ENCODE measurements at regions of chr1 and their contacts with region 1.

Region 1: DNA sequence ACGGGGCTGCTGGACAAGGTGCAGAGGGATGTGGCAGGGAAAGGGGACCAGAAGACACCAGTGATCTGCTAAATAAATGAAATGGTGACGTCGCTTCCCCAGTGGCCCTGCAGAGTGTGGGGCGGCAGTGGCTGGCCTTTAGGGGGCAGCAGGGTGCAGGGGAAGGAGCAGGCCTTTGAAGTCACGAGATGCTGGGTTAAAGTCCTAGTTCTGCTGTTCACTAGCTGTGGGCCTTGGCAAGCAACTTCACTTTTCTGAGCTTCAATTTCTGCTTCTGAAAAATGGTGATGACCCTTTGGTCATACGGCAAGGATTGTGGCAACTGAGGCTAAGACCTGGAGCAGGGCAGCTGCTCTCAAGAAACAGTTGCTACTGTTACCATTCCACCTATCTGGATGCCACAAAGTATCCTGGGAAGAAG is 9.2 kb upstream of the GALE start:
- DNase-seq: no peak
- ATAC-seq: peak; percentile 85
- H3K4me3 ChIP-seq: no peak overlapping the region
- H3K27ac ChIP-seq: no peak overlapping the region
- H3K4me1 ChIP-seq: no peaks in the 10 kb centered on the region
- H3K27me3 ChIP-seq: no peaks in the 10 kb centered on the region
- CTCF ChIP-seq: peak; percentile 91

Region 2: DNA sequence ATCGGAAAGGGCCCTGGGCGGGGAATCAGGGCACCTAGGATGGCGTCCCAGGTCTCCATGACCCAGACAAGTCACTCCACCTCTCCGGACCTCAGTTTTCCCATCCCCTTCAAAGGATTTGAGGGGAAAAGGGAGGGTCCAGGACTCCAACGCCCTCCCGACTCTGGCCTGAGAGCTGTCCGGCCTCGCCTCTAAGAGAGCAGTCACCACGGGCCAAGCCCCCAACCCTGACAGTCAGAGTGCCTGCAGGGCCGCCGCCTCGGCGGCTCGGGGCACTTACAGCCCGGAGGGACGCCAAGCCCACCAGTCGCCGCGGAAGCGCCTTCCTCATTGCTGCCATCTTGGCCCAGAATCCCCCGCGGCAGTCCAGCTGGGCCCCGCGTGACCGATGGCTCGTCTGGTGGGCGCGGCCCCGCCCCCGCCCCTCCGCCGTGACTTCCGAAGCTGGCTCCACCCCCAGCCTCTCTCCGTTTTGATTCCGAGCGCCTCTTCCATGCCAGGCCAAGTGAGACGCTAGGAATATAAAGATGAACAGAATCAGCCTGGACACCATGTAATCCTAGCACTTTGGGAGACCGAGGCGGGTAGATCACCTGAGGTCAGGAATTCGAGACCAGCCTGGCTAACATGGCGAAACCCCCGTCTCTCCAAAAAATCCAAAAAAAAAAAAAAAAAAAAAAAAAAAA is 15.5 kb after region 1 on chr1 and contains the start of gene HMGCL:
- CTCF ChIA-PET with region 1: interaction called, 16 read pairs
- POLR2A ChIA-PET with region 1: interaction called, 4 read pairs
- in situ Hi-C with region 1: no loop called
- intact Hi-C with region 1: no loop called
- DNase-seq: no peak
- ATAC-seq: peak; percentile 98
- H3K4me3 ChIP-seq: peak within 1 kb of the TSS; percentile 87 to 99
- H3K27ac ChIP-seq: peak within 1 kb of the TSS; percentile 91
- H3K4me1 ChIP-seq: 0 out of 2 replicates have a peak, but pooled peaks cover 5% of the 10 kb centered on the region
- H3K27me3 ChIP-seq: no peaks in the 10 kb centered on the region
- CTCF ChIP-seq: no peak
- total RNA-seq, gene HMGCL: 30.8 TPM

Region 3: GRCh38 chr1:23916209-23917131 is 106.7 kb after region 1 on chr1:
- CTCF ChIA-PET with region 1: interaction called, 4 read pairs
- POLR2A ChIA-PET with region 1: no interaction called
- in situ Hi-C with region 1: no loop called
- intact Hi-C with region 1: loop called (anchors 10 kb)
- DNase-seq: peak; percentile 51
- ATAC-seq: peak; percentile 97
- H3K4me3 ChIP-seq: no peak overlapping the region
- H3K27ac ChIP-seq: no peak overlapping the region
- H3K4me1 ChIP-seq: no peaks in the 10 kb centered on the region
- H3K27me3 ChIP-seq: no peaks in the 10 kb centered on the region
- CTCF ChIP-seq: peak; percentile 85

Region 4: GRCh38 chr1:23959041-23959460 is 149.3 kb after region 1 on chr1:
- CTCF ChIA-PET with region 1: no interaction called
- POLR2A ChIA-PET with region 1: interaction called, 19 read pairs
- in situ Hi-C with region 1: no loop called
- intact Hi-C with region 1: no loop called
- DNase-seq: no peak
- ATAC-seq: peak; percentile 74
- H3K4me3 ChIP-seq: peak overlapping the region; percentile 78 to 98
- H3K27ac ChIP-seq: peak overlapping the region; percentile 100
- H3K4me1 ChIP-seq: peaks cover 51% of the 10 kb centered on the region
- H3K27me3 ChIP-seq: no peaks in the 10 kb centered on the region
- CTCF ChIP-seq: peak; percentile 50; the same call in 1 of the 2 replicates